ENCODE measurements at regions of chr9 and their contacts with region 1.

Region 1: DNA sequence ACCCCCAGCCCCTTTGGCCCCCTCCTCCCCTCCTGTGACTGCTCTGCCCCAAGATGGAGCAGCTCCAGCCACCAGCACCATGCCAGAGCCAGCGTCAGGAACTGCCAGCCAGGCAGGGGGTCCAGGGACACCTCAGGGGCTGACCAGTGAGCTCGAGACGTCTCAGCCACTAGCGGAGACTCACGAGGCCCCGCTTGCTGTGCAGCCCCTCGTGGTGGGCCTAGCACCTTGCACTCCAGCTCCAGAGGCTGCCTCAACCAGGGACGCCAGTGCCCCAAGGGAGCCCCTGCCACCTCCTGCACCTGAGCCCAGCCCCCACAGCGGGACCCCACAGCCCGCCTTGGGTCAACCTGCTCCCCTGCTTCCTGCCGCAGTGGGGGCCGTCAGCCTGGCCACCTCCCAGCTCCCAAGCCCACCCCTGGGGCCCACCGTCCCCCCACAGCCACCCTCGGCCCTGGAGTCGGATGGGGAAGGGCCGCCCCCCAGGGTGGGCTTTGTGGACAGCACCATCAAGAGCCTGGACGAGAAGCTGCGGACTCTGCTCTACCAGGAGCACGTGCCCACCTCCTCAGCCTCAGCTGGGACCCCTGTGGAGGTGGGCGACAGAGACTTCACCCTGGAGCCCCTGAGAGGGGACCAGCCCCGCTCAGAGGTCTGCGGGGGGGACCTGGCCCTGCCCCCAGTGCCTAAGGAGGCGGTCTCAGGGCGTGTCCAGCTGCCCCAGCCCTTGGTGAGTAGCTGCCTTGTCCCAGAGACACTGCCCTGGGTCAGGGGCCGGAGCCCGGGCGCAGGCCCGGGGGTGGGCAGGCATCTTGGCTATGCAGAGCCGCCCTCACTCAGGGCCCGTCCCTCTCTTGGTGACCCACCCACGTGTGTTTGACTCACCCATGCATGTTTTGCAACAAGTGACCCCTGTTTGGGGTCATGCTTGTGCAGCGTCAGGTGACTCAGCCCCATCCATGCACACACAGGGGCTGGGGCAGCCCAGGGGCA is 105.2 kb downstream of the WNK2 start:
- H3K4me3 Mint-ChIP-seq: no peak overlapping the region
- H3K27ac Mint-ChIP-seq: no peak overlapping the region
- H3K4me1 Mint-ChIP-seq: no peaks in the 10 kb centered on the region
- H3K27me3 Mint-ChIP-seq: peaks cover 38% of the 10 kb centered on the region

Region 2: DNA sequence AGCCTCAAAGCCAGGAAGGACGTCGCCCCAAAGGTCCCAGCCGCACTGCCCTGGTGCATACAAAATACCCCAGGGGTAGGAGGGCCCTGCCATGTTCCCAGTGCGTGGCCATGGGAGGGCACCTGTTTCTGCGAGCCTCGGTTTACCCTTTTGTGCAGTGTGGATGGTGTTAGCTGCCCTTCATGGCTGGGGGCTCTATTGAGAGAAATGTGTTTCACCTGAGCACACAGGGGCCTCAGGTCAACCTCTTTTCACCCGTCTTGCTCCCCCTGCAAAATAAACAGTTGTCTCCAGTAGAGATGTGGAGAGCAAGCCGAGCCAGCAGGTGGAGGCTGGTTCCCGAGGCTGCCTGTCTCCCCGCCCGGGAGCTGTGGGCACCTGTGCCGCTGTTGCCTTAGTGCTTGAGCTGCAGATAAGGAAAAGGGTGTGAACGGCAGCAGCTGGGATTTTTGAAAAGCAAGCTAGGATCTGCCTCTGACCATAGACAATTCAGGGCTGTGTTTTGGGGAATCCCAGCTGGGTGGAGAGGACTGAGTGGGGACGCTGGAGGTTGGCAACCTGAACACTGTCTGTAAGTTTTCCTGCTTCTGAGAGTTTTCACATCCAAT is 95.9 kb before region 1 on chr9:
- intact Hi-C with region 1: loop called (anchors 10 kb)
- H3K4me3 Mint-ChIP-seq: no peak overlapping the region
- H3K27ac Mint-ChIP-seq: no peak overlapping the region
- H3K4me1 Mint-ChIP-seq: peaks cover 5% of the 10 kb centered on the region
- H3K27me3 Mint-ChIP-seq: peaks cover 72% of the 10 kb centered on the region